ENCODE measurements at regions of chr1 and their contacts with region 1.

Region 1: DNA sequence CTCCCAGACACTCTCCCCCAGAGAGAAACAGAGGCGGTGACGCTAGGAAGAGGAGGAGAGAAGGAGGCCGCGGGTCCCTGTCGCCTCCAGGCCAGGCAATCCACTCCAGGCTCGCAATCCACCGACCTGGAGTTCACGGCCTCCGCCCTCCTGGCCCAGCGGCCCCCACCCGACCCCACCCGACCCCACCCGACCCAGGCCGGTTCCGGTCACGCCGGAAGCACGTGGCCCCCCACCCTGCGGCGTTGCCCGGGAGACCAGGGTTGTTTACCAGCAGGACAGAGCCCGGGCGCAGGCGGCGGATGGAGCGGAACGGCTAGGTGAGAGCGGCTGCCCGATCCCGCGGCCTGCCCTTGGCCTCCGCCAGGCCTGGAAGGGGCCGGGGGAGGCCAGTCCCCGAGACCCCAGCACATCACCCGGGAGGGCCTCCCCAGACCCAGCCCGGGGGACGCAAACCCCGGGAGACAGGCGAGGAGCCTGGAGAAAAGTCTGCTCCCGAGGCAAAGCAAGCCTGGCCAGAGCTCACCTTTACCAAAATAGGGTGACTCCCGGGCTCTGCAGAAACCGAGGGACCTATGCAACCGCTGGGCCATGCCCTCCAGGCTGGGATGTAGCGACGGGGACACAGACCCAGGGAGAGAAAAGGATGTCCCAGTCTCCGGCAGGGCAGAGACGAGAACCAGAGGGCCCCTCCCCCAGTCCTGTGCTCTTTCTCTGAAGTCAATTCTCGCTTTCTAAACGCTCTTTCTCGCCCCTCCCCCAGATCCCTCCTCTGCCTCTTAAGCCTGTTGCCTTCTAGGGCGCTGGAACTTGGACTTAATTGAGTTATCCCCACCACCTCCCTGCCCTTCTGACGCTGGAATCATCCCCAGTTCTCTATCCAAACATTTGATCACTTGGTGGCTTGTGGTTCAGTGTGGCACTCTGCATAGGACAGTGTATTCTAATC is at the starts of genes PLA2G2C and UBXN10:
- DNase-seq: peak; percentile 94
- H3K4me3 Mint-ChIP-seq: peak within 1 kb of the TSS; percentile 62
- H3K27ac Mint-ChIP-seq: peak within 1 kb of the TSS; percentile 82
- H3K4me1 Mint-ChIP-seq: peaks cover 41% of the 10 kb centered on the region
- H3K27me3 Mint-ChIP-seq: no peaks in the 10 kb centered on the region
- total RNA-seq, gene PLA2G2C: 0.94 to 0.95 TPM
- total RNA-seq, gene UBXN10: 0.27 to 0.33 TPM

Region 2: DNA sequence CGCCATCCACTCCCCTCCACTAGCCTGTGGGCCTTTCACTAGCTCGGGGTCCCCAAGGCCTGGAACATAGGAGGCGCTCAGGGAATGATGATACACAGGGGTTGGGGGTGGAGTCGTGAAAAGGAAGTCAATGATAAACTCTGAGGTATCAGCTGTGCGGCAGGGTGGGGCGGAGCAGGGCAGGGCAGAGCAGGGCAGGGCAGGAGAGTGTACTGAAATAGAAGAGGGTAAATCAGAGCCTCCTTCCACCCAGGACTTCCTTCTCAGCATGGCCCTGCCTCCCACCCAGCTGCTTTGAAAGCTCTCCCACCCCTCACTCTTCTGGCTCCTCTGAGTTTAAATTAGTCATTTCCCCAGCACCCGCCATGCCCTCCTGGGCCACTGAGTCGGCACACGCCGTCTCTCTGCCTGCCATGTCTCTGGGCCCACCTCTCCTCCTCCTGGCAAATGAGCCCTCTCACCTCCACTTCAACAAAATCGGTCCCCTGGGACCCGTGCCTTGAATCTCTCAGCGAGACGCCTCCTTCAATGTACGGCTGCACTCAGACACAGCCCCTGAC is 717.6 kb before region 1 on chr1:
- CTCF ChIA-PET with region 1: no interaction called
- intact Hi-C with region 1: loop called (anchors 10 kb)
- DNase-seq: peak; percentile 87
- H3K4me3 Mint-ChIP-seq: peak overlapping the region; percentile 37
- H3K27ac Mint-ChIP-seq: peak overlapping the region; percentile 88
- H3K4me1 Mint-ChIP-seq: peaks cover 89% of the 10 kb centered on the region
- H3K27me3 Mint-ChIP-seq: no peaks in the 10 kb centered on the region

Region 3: GRCh38 chr1:19799877-19800804 is 386.0 kb before region 1 on chr1 and contains the start of gene TMCO4:
- CTCF ChIA-PET with region 1: no interaction called
- intact Hi-C with region 1: loop called (anchors 5 kb)
- DNase-seq: peak; percentile 67
- H3K4me3 Mint-ChIP-seq: peak within 1 kb of the TSS; percentile 78
- H3K27ac Mint-ChIP-seq: peak within 1 kb of the TSS; percentile 90
- H3K4me1 Mint-ChIP-seq: peaks cover 16% of the 10 kb centered on the region
- H3K27me3 Mint-ChIP-seq: no peaks in the 10 kb centered on the region
- total RNA-seq, gene TMCO4: 11.9 to 15.4 TPM

Region 4: DNA sequence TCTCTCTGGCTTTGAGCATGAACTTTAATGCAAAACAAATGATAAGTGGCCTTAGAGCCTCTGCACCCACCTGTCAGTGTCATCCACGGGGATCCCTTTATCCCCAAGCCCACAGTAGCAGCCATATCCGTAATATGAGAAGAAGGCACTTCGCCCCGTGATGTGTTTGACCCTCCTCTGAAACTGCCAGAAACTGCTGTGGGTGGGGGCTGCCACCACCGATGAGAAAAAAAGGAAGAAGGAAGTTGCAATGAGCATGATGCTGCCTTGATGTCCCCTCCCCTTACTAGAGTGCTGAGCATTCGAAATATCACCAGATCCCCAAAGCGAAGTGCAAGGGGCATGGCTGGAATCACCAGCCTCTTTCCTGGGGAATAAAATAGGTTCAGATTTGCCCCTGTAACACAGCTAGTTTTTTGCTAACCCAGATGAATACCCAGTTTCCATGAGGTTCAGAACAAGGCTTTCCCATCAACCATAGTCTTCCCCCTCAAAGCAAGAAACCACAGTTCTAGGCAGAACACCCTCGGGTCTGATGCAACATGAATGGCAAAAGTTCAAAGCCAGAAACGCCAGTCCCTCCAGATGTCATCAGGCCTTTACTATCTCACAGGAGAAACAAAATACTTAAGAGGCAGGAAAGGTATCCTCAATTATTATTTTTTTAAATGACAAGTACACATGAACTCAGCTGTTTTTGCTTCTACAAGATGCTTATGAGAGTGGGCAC is 11.0 kb before region 1 on chr1:
- CTCF ChIA-PET with region 1: interaction called, 4 read pairs
- intact Hi-C with region 1: loop called (anchors 1 kb)
- DNase-seq: no peak
- H3K4me3 Mint-ChIP-seq: no peak overlapping the region
- H3K27ac Mint-ChIP-seq: peak overlapping the region; percentile 34
- H3K4me1 Mint-ChIP-seq: peaks cover 21% of the 10 kb centered on the region
- H3K27me3 Mint-ChIP-seq: no peaks in the 10 kb centered on the region

Region 5: DNA sequence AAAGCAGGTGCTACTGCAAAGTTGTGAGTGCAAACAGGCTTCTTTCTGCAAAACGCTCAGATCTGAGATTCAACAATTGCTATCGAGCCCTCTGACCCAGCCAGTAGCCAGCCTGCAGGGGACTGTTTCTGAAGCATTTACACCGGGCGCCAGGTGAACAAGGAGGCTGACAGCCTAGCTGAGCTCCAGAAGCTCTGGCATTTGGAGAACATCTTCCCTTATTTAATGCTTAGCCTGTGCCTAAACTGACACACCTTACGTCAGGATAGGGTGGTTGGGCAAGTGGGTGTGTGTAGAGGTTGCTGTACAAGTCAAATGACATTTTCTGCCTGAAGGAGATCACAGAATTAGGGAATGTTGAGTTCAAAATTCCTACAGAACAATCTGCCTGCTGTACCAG is 16.1 kb after region 1 on chr1:
- CTCF ChIA-PET with region 1: no interaction called
- intact Hi-C with region 1: no loop called
- DNase-seq: no peak
- H3K4me3 Mint-ChIP-seq: no peak overlapping the region
- H3K27ac Mint-ChIP-seq: no peak overlapping the region
- H3K4me1 Mint-ChIP-seq: no peaks in the 10 kb centered on the region
- H3K27me3 Mint-ChIP-seq: peaks cover 2% of the 10 kb centered on the region

Region 6: DNA sequence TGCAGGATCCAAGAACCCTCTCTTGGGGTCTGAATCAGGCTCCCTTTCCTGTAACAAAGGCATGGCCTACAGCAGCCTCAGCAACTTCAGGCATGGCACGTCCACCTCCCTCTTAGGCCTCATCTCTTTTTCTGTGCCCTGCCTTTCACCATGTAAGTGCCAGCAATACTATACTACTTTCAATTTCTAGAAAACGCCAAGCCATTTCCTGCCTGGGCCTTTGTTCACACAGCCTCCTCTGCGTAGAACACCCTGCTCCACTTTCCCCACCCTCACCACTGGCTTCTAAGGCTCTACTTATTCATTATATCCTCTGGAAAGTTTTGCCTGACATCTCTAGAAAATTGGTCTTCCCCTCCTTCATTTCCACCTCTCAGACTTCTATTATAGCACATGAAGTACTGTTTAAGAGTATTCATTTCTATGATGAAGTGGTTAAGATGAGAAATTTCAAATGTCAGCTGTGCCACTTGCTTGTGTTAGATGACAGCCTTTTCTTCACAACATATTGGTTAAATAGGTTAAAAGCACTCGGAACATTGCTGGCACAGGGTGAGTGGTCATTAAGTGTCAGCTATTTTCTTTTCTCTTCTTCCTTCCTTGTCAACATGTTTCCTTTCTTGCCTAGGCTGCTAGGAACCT is 63.0 kb after region 1 on chr1:
- CTCF ChIA-PET with region 1: no interaction called
- intact Hi-C with region 1: loop called (anchors 1 kb)
- DNase-seq: peak; percentile 86
- H3K4me3 Mint-ChIP-seq: peak overlapping the region; percentile 32
- H3K27ac Mint-ChIP-seq: peak overlapping the region; percentile 95
- H3K4me1 Mint-ChIP-seq: peaks cover 25% of the 10 kb centered on the region
- H3K27me3 Mint-ChIP-seq: no peaks in the 10 kb centered on the region